Sigmoid colon (tissue), 7 donors: ENCODE measurements at regions of chr12 and their contacts with region 1.

Region 1: GRCh38 chr12:64625243-64626077 is 15.2 kb downstream of the RASSF3 start:
- DNase-seq: peak; percentile 93
- H3K4me3 ChIP-seq: peak overlapping the region in 3 of 4 donors; percentile 26 to 33 (median 27)
- H3K27ac ChIP-seq: peak overlapping the region; percentile 83 to 91 (median 84)
- H3K4me1 ChIP-seq: peaks cover 0 to 91% (median 76%) of the 10 kb centered on the region in 4 donors
- H3K27me3 ChIP-seq: no peaks in the 10 kb centered on the region
- CTCF ChIP-seq: no peak
- EP300 ChIP-seq: peak; percentile 51 to 80 (median 70)
- POLR2A ChIP-seq: peak in 1 of 2 donors; percentile 24

Region 2: DNA sequence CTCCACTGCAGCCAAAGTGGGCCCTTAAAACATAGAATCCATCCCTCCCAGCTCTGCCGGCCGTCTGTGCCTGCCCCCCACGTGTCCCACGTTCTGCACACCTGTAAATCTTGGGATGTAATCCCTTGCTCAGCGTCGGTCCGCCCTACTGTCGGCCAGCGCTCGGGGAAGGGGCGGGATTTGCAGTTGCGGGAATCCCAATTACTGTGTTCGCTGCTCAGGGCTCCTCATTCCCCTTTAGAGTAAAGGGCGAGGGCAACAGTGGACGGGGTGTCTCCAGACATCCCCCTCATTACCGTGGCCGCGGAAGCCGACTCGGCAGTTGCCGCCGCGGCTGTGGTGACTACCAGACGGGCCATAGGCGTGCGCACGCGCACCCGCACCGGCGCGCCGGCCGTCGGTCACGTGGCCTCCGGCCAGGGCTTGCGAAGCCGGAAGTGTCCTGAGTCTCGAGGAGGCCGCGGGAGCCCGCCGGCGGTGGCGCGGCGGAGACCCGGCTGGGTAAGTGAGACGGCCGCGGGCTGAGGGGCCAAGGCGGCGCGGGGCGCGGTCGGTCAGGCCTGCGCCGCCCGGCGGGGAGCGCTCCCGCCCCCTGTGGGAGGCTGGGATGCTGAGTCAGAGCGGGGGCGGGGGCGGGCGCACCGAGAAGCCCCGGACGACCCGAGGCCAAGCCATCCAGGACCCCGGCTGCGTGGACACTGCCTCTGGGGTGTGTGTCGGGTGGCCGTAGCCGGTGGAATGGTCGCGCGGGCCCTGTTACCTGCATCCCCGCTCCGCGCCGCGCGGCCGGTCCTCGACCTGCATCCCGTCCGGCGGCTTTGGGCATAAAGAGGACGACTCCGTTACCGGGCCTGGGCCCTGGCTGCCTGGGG is 173.5 kb before region 1 on chr12 and contains the start of gene TBK1:
- intact Hi-C with region 1: loop called (anchors 5 kb)
- DNase-seq: peak; percentile 95
- H3K4me3 ChIP-seq: peak within 1 kb of the TSS; percentile 90 to 99 (median 96)
- H3K27ac ChIP-seq: peak within 1 kb of the TSS; percentile 97 to 100 (median 98)
- H3K4me1 ChIP-seq: peaks cover 0 to 30% (median 15%) of the 10 kb centered on the region in 4 donors
- H3K27me3 ChIP-seq: no peaks in the 10 kb centered on the region
- CTCF ChIP-seq: peak in 1 of 4 experiments; percentile 20
- EP300 ChIP-seq: no peak
- POLR2A ChIP-seq: no peak
- total RNA-seq, gene TBK1: 23.5 to 30.0 (median 27.7) TPM

Region 3: GRCh38 chr12:64685050-64685449 is 59.6 kb after region 1 on chr12:
- intact Hi-C with region 1: loop called (anchors 2 kb)
- DNase-seq: no peak
- H3K4me3 ChIP-seq: no peak overlapping the region
- H3K27ac ChIP-seq: peak overlapping the region in 3 of 4 donors; percentile 79 to 92 (median 81)
- H3K4me1 ChIP-seq: peaks cover 0 to 88% (median 69%) of the 10 kb centered on the region in 4 donors
- H3K27me3 ChIP-seq: no peaks in the 10 kb centered on the region
- CTCF ChIP-seq: no peak
- EP300 ChIP-seq: no peak
- POLR2A ChIP-seq: no peak